ENCODE measurements at regions of chr19 and their contacts with region 1.

Region 1: DNA sequence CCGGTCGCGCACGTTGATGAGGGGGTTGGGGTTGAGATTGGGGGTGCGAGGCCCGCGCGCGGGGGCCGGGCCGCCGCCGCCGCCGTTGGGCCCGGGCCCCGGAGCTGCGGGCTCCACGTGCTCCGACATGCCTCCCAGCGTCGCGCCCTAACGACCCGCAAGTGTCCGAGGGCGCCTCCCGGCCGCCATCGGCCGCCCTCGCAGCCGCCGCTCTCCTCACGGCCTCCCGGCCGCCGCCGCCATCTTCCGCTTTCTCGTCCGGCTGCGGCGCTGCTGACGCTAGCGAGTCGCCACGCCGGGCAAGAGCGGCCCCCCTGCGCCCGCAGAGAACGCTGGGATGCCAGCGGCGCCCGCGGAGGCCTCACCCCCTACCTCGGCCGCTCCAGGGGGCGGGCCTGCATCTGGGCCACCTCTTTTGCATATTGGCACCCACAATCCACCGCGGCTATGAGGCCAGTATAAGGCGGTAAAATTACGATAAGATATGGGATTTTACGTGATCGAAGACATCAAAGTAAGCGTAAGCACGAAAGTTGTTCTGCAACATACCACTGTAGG is at the start of gene TMEM259:
- DNase-seq: peak; percentile 85
- H3K4me3 ChIP-seq: peak within 1 kb of the TSS; percentile 86 to 95 (median 94)
- H3K27ac ChIP-seq: peak within 1 kb of the TSS; percentile 91 to 97 (median 96)
- H3K4me1 ChIP-seq: peaks cover 42 to 69% (median 57%) of the 10 kb centered on the region in 3 donors
- H3K27me3 ChIP-seq: no peaks in the 10 kb centered on the region
- CTCF ChIP-seq: peak in 1 of 6 experiments; percentile 8
- POLR2A ChIP-seq: peak in 3 of 4 donors; percentile 67 to 85 (median 77)
- total RNA-seq, gene TMEM259: 101 to 182 (median 146) TPM

Region 2: DNA sequence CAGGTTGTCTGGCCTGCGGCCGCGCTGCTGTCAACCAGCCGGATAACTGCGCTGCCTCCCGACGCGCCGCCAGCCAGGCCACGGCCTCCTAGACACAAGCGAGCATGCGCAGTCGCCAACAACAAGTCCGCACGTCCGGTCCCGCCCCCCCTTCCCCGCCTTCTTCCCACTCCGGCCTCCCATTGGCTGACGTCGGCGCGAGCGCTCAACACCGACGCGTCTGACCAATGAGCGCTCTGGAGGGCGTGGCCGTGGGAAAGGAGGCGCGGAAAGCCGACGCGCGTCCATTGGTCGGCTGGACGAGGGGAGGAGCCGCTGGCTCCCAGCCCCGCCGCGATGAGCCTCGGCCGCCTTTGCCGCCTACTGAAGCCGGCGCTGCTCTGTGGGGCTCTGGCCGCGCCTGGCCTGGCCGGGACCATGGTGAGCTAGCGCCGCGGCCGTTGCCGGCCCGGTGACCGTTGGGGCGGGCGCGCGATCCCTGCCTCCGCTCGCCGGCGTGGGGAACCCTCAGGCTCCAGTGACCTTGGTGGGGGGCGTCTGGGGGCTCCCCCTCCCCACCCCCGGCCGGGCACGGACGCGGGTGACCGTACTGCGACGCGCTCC is 82.9 kb after region 1 on chr19 and contains the start of gene GPX4:
- intact Hi-C with region 1: loop called (anchors 5 kb)
- DNase-seq: peak; percentile 97
- H3K4me3 ChIP-seq: peak within 1 kb of the TSS; percentile 67 to 92 (median 76)
- H3K27ac ChIP-seq: peak within 1 kb of the TSS; percentile 95 to 99 (median 98)
- H3K4me1 ChIP-seq: peaks cover 60 to 86% (median 75%) of the 10 kb centered on the region in 3 donors
- H3K27me3 ChIP-seq: no peaks in the 10 kb centered on the region
- CTCF ChIP-seq: no peak
- POLR2A ChIP-seq: peak in 3 of 4 donors; percentile 72 to 99 (median 96)
- total RNA-seq, gene GPX4: 108 to 405 (median 244) TPM